ENCODE measurements at regions of chr10 and their contacts with region 1.

Region 1: GRCh38 chr10:119542988-119543813 is 682 bp upstream of the RGS10 start:
- DNase-seq: peak; percentile 85
- H3K4me3 ChIP-seq: peak overlapping the region; percentile 69
- H3K27ac ChIP-seq: no peak overlapping the region
- H3K4me1 ChIP-seq: peaks cover 47% of the 10 kb centered on the region
- CTCF ChIP-seq: peak; percentile 97

Region 2: DNA sequence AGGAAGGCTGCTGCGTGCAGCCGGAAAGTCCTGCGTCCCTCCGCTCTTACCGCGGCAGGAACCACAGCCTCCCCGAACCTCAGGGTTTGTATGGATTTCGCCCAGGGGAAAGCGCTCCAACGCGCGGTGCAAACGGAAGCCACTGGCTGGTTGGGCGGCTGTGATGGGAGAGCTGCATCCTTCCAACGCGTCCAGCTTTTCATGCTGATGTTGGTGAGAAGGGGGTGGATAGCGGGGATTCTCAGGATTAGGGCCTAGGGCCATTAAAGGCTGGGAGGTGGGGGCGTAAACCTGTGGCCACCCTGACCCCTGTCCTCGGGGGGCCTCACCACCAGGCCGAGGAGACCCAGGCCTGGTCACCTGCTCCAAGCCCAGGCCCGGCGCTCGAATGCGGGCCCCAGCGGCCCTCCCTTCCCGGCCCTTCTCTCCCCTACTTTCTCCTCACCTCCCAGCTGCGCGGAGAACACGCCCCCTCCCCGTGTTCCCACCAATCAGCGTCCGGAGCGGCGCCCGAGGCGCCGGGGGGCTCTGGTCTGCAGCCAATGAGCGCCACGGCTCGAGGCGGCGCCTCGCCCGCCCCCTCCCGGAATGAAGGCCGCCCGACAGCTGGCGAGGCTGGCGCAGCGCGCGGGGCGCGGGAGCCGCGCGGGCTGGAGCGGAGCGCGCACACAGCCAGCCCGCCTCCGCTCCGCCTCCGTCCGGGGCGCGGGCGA is 514.1 kb before region 1 on chr10:
- CTCF ChIA-PET with region 1: no interaction called
- POLR2A ChIA-PET with region 1: no interaction called
- intact Hi-C with region 1: loop called (anchors 2 kb)
- DNase-seq: peak; percentile 92
- H3K4me3 ChIP-seq: peak overlapping the region; percentile 53
- H3K27ac ChIP-seq: no peak overlapping the region
- H3K4me1 ChIP-seq: peaks cover 37% of the 10 kb centered on the region
- CTCF ChIP-seq: no peak

Region 3: GRCh38 chr10:119207367-119207668 is 335.9 kb before region 1 on chr10 and contains the start of gene GRK5:
- CTCF ChIA-PET with region 1: no interaction called
- POLR2A ChIA-PET with region 1: interaction called, 7 read pairs
- intact Hi-C with region 1: loop called (anchors 1 kb)
- DNase-seq: peak; percentile 98
- H3K4me3 ChIP-seq: peak within 1 kb of the TSS; percentile 75
- H3K27ac ChIP-seq: peak within 1 kb of the TSS; percentile 69
- H3K4me1 ChIP-seq: peaks cover 28% of the 10 kb centered on the region
- CTCF ChIP-seq: no peak
- total RNA-seq, gene GRK5: 4.2 and 4.7 TPM in 2 replicates

Region 4: DNA sequence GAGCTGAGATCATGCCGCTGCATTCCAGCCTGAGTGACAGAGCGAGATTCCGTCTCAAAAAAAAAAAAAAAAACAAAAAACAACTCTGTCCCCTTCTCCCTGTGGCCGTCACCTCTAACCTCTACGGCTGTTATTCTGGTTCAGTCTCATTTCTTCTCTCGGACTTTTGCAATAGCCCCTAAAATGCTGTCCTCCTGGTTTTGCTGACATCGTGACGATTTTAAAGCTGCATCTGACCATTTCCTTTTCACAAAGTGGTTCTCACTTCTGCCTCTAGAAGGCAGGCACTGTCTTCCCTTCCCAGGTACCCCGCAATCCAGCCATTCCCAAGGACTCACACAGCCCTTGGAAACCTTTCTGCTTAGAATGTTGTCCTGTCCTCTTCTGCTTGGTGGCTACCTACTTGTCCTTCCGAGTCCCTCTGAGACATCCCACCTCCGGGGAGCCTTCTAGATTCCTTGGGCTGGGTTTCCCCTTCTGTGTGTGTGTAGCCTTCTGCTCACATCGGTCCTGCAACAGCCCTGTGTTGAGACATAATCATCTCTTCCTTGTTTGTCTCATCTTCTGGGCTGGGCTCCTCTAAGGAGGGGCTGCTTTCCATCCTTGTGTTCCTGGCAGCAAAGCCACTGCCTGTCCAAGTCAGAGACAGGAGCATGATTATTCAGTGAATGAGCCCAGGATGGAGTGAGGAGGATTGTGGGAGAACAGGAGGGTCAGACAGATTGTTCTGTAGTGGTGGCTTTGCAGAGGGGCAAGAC is 252.7 kb before region 1 on chr10:
- CTCF ChIA-PET with region 1: no interaction called
- POLR2A ChIA-PET with region 1: no interaction called
- intact Hi-C with region 1: no loop called
- DNase-seq: no peak
- H3K4me3 ChIP-seq: no peak overlapping the region
- H3K27ac ChIP-seq: no peak overlapping the region
- H3K4me1 ChIP-seq: peaks cover 52% of the 10 kb centered on the region
- CTCF ChIP-seq: no peak

Region 5: DNA sequence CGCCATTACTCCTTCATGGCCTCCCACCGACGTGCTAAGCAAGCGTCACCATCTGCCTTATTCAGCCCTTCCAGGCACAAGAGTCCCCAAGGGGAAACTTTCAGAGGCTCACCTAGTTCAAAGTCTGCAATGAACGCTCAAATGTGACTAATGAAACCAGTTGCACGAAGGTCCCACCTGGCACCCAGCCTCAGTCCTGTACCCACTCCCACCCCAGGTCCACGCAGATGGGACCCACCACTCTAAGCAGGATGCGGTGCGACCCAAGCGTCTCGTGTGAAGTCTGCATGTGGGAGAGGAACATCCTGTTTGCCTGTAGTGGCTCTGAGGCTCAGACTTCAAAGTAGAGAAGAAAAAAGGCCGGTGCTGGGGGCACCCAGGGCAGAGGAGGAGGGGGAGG is 41.0 kb before region 1 on chr10:
- CTCF ChIA-PET with region 1: no interaction called
- POLR2A ChIA-PET with region 1: interaction called, 3 read pairs
- intact Hi-C with region 1: loop called (anchors 5 kb)
- DNase-seq: peak; percentile 88
- H3K4me3 ChIP-seq: peak overlapping the region; percentile 28
- H3K27ac ChIP-seq: peak overlapping the region; percentile 54
- H3K4me1 ChIP-seq: peaks cover 33% of the 10 kb centered on the region
- CTCF ChIP-seq: no peak

Region 6: DNA sequence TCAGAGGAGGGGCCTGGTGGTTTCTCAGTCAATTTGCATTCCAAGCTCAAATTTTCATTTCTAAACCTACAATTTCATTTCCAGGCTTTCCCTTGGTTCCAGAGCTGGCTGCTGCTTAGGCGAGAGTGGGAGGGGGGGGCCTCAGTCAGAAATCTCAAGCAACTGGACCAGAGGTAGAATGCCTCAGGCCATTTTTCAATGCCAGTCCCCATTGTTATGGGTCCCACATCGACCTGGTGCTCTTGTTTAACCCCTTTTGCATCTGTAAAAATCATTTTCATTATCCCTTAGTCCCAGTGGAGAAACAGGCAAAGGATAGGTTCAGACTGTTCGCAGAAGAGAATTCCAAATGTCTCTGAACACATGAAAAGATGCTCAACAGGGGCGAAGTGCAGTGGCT is 94.4 kb after region 1 on chr10:
- CTCF ChIA-PET with region 1: no interaction called
- POLR2A ChIA-PET with region 1: no interaction called
- intact Hi-C with region 1: no loop called
- DNase-seq: no peak
- H3K4me3 ChIP-seq: no peak overlapping the region
- H3K27ac ChIP-seq: no peak overlapping the region
- H3K4me1 ChIP-seq: no peaks in the 10 kb centered on the region
- CTCF ChIP-seq: no peak

Region 7: GRCh38 chr10:119650692-119651513 is 107.7 kb after region 1 on chr10 and contains the start of gene BAG3:
- CTCF ChIA-PET with region 1: no interaction called
- POLR2A ChIA-PET with region 1: interaction called, 4 read pairs
- intact Hi-C with region 1: loop called (anchors 2 kb)
- DNase-seq: peak; percentile 80
- H3K4me3 ChIP-seq: peak within 1 kb of the TSS; percentile 86
- H3K27ac ChIP-seq: peak within 1 kb of the TSS; percentile 48
- H3K4me1 ChIP-seq: peaks cover 16% of the 10 kb centered on the region
- CTCF ChIP-seq: no peak
- total RNA-seq, gene BAG3: 0.41 and 1.9 TPM in 2 replicates